ENCODE measurements at regions of chr22 and their contacts with region 1.

Region 1: GRCh38 chr22:38069372-38070249 is 12.4 kb downstream of the PICK1 start:
- DNase-seq: no peak
- H3K4me3 ChIP-seq: no peak overlapping the region
- H3K27me3 ChIP-seq: no peaks in the 10 kb centered on the region
- CTCF ChIP-seq: peak; percentile 75

Region 2: DNA sequence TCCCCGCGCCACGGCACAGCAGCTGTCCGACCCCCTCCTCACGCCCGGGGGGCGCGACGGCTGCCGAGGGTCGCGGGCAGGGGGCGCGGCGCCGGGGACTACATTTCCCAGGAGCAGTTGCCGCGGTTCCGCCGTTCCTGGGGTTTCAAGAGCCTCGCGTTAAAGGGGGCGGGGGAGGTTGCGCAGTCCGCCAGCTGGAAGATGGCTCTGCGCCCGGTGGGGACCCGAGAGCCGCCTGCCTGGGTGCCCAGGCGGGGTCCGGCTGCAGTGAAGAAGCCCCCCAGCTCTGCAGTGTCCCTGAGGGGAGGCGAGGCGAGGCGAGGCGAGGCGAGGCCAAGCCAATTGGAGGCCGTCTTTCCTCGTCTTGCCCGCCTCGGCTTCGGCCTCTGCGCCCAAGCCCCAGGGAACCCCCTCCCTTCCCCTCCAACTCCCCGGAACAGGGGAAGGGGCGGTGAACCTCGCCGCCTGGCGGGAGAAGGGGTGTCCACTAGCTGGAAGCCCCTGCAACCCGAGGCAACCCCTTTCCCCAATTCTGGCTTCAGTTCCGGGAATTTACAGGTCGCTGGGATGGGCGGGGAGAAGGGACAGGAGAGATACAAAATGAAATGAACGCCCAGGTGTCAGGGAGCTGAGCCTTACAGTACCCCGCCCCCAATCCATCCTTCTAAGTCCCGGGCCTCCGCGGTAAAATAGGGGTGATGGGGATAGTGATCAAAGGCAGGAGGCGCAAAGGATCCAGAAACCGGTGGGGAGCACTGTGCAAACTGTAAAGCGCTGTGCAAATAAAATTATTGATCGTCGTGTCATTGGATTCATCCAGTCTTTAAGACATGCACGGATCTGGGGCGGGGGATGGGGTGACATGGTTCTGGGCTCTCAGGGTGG is 267.1 kb before region 1 on chr22:
- CTCF ChIA-PET with region 1: no interaction called
- POLR2A ChIA-PET with region 1: no interaction called
- DNase-seq: no peak
- H3K4me3 ChIP-seq: peak overlapping the region; percentile 60
- H3K27me3 ChIP-seq: peaks cover 3% of the 10 kb centered on the region; the same call in 1 of the 2 replicates
- CTCF ChIP-seq: no peak

Region 3: GRCh38 chr22:37905534-37906363 is 163.9 kb before region 1 on chr22 and contains the start of gene MICALL1:
- CTCF ChIA-PET with region 1: no interaction called
- POLR2A ChIA-PET with region 1: no interaction called
- DNase-seq: no peak
- H3K4me3 ChIP-seq: peak within 1 kb of the TSS; percentile 77
- H3K27me3 ChIP-seq: no peaks in the 10 kb centered on the region
- CTCF ChIP-seq: no peak
- polyA plus RNA-seq, gene MICALL1: 16.6 and 26.5 TPM in 2 replicates

Region 4: GRCh38 chr22:38056969-38057891 is 12.4 kb before region 1 on chr22 and contains the start of gene PICK1:
- CTCF ChIA-PET with region 1: interaction called, 11 read pairs
- POLR2A ChIA-PET with region 1: no interaction called
- DNase-seq: peak; percentile 71
- H3K4me3 ChIP-seq: peak within 1 kb of the TSS; percentile 81
- H3K27me3 ChIP-seq: peaks cover 1% of the 10 kb centered on the region; the same call in 1 of the 2 replicates
- CTCF ChIP-seq: peak; percentile 12; the same call in 1 of the 2 replicates
- polyA plus RNA-seq, gene PICK1: 27.9 and 32.4 TPM in 2 replicates

Region 5: DNA sequence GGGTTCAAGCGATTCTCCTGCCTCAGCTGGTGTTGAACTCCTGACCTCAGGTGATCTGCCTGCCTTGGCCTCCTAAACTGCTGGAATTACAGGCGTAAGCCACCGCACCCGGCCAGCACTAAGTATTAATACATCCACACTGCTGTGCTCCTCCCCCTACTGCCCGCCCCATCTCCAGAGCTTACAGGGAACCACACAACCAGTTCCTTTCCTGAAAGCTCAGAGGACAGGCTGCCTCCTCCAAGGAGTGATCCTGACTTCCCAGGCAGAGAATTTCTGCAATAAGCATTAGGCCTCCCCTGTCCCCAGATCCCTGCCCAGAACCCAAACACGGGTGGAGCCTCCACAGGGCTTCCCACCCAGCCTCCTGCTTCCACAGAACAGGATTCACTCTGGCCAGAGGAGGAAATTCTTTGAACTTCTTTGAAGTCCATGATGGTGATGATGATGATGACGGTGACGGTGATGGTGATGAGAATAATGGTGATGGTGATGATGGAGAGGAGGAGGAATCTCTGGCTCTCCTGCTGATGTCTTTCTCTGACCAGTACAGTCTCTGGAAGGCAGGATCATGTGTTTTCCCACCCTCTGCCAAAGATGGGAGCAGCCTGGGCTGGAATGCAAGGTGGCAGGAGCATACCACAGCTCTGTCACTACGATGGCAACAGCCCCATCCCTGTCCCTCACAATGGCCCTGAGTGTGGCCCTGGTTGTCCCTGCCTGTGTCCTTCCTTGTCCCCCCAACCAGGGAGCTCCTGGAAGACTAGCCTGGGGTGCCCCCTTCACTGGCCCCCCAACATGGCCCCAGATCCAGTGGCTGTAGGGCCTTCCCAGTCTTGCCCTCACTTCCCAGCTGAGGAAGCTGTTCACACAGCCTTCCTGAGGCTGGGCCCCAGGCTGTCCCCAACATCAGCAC is 281.1 kb after region 1 on chr22:
- CTCF ChIA-PET with region 1: interaction called, 14 read pairs
- POLR2A ChIA-PET with region 1: no interaction called
- DNase-seq: no peak
- H3K4me3 ChIP-seq: no peak overlapping the region
- H3K27me3 ChIP-seq: no peaks in the 10 kb centered on the region; the same call in 1 of the 2 replicates
- CTCF ChIP-seq: no peak

Measured in BJ (cell line).